PC-9 (cell line): ENCODE measurements at regions of chr13 and their contacts with region 1.

Region 1: DNA sequence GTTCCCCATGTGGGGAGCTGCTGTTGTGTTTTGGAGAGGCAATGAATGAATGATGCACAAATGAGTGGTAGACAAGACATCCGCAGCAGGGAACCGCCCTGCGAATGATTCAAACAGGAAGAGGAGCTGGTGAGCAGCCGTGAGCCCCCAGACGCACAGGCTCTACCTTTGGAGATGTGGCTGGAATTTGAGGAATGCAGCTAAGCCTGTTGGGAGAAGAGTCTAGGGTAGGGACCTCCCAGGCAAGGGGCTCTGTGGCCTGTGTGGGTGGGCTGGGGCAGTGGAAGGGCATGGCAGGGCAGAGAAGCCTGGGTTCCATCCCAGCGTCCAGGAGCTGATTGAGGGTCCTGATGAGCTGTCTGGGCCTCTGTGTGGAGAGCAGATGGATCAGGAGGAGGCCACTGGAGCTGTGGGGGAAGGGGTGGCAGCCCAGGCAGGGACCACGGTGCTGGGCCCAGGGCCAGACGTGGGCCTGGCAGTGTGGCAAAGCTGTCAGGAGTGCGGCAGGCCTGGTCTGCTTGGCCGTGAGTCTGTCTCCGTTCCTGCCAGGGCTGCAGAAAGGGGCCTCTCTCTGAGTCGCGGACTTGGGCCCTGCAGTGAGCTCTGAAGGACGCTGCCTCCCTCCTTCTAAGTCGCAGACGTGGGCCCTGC is 41.8 kb upstream of the DCUN1D2 start:
- DNase-seq: peak; percentile 85 to 92
- H3K4me3 ChIP-seq: no peak overlapping the region
- H3K27ac ChIP-seq: peak overlapping the region; percentile 54
- H3K4me1 ChIP-seq: peaks cover 43% of the 10 kb centered on the region
- H3K27me3 ChIP-seq: no peaks in the 10 kb centered on the region
- CTCF ChIP-seq: no peak

Region 2: DNA sequence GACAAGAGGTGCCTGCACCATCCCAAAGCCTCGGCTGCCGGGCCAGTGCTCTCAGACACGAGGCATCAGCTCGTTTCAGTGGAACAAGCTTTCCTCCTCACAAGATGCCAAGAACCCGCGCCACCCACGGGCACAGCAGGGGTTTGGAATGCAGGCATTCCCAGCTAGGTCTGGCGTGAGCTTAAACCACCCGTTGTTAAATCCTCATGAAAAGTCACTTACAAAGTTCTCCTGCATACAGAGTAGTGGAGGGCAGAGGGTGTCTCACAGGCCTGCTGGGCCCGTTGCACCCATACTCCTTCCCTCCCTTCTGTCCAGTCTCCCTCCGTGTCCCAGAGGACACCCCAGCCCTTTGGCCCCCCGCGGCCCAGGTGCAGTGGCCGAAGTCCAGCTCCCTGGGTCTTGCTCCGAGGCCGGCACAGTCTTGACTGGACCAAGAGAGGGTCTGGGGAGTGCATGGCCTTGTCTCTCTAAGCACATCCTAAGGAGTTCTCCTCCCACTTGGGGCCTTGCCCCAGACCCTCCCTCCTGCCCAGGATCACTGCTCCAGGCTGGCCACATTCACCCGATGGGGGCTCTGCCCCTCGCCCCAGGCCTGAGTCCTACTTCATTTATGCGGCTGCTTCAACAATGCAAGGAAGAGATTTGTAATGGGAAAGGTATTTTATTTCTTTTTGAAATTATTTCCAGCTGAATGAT is 133.2 kb before region 1 on chr13:
- CTCF ChIA-PET with region 1: no interaction called
- POLR2A ChIA-PET with region 1: no interaction called
- intact Hi-C with region 1: no loop called
- DNase-seq: peak; percentile 36 to 45
- H3K4me3 ChIP-seq: no peak overlapping the region
- H3K27ac ChIP-seq: no peak overlapping the region
- H3K4me1 ChIP-seq: peaks cover 10% of the 10 kb centered on the region; the same call in 1 of the 2 replicates
- H3K27me3 ChIP-seq: peaks cover 13% of the 10 kb centered on the region; the same call in 1 of the 2 replicates
- CTCF ChIP-seq: no peak

Region 3: DNA sequence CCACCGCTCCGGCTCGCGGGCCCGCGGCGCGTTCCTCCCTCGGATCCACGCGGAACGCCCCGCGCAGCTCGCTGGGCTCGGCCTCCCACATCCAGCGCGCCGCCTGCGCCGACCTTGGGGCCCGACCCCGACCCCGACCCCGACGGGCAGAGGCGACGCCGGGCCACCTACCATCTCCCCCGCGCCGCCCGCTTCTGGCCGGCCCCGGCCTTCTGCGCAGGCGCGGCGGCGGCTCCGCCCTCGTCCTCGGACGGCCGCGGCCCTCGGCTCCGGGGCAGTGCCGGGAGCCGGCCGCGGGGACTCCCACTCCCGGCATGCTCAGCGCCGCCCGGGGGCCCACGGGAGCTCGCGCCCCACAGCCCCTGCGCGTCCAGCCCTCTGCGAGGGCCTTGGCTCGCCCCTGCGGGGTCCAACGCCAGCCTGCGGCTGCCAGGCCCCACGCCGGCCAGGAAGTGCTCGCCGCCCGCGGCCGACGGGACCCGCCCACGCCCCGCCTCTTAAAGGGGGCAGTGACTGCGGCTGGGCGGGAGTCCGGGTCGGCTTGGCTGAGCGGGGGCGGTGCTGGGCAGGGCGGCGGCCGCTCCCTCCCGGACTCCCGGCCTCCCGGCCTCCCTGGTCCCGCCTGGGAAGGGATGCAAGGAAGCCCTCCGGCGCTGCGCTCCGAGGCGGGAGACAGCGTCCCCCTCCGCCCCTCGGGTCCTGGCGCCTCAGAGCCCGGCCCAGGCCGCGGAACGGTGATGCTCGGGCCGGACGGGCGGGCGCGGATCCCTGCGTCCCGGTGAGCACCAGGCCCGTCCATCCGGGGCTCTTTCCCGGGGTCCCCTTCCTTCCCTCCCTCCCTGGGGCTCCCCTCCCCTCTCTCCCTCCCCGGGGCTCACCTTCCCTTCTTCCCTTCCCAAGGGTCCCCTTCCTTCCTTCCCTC is 41.5 kb before region 1 on chr13 and contains the start of gene DCUN1D2:
- CTCF ChIA-PET with region 1: no interaction called
- POLR2A ChIA-PET with region 1: interaction called, 3 read pairs
- intact Hi-C with region 1: loop called (anchors 1 kb)
- DNase-seq: peak; percentile 76 to 96
- H3K4me3 ChIP-seq: peak within 1 kb of the TSS; percentile 86
- H3K27ac ChIP-seq: peak within 1 kb of the TSS; percentile 23
- H3K4me1 ChIP-seq: peaks cover 55% of the 10 kb centered on the region
- H3K27me3 ChIP-seq: no peaks in the 10 kb centered on the region
- CTCF ChIP-seq: no peak
- total RNA-seq, gene DCUN1D2: 33.0 and 34.7 TPM in 2 replicates

Region 4: DNA sequence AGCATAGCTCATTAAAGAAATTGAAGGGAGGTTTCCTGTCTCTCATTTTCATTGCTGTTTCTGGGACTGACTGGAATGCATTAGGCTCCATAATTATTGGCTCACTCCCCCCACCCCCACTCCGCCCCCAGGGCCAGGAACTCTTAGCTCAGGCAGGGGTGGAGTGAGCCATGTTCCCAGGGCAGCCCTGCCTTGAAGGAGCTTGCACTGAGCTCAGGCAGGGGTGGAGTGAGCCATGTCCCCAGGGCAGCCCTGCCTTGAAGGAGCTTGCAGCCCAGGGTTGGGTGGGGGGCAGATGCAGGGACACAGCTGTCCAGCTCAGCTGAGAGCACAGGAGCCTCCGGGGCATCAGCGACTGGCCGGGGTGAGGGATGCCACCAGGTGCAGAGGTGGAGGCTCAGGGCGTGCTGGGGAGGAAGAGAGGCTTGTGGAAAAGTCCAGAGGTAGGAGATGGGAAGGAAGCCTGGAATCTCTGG is 13.2 kb after region 1 on chr13:
- CTCF ChIA-PET with region 1: interaction called, 16 read pairs
- POLR2A ChIA-PET with region 1: interaction called, 10 read pairs
- intact Hi-C with region 1: no loop called
- DNase-seq: peak; percentile 50 to 74
- H3K4me3 ChIP-seq: no peak overlapping the region
- H3K27ac ChIP-seq: no peak overlapping the region
- H3K4me1 ChIP-seq: peaks cover 23% of the 10 kb centered on the region
- H3K27me3 ChIP-seq: no peaks in the 10 kb centered on the region
- CTCF ChIP-seq: no peak